B cell (primary cell): ENCODE measurements at regions of chr16 and their contacts with region 1.

Region 1: GRCh38 chr16:70653809-70654771 is 7.7 kb downstream of the IL34 start:
- DNase-seq: peak; percentile 82
- ATAC-seq: peak; percentile 88
- H3K4me3 ChIP-seq: peak overlapping the region in 1 of 5 experiments; percentile 15
- H3K4me3 Mint-ChIP-seq: peak overlapping the region; percentile 3
- H3K27ac ChIP-seq: no peak overlapping the region
- H3K27ac Mint-ChIP-seq: no peak overlapping the region
- H3K4me1 ChIP-seq: peaks cover 2 to 5% of the 10 kb centered on the region in 2 donors
- H3K4me1 Mint-ChIP-seq: peaks cover 4% of the 10 kb centered on the region
- H3K27me3 ChIP-seq: no peaks in the 10 kb centered on the region
- H3K27me3 Mint-ChIP-seq: peaks cover 3% of the 10 kb centered on the region
- CTCF ChIP-seq: peak; percentile 88

Region 2: DNA sequence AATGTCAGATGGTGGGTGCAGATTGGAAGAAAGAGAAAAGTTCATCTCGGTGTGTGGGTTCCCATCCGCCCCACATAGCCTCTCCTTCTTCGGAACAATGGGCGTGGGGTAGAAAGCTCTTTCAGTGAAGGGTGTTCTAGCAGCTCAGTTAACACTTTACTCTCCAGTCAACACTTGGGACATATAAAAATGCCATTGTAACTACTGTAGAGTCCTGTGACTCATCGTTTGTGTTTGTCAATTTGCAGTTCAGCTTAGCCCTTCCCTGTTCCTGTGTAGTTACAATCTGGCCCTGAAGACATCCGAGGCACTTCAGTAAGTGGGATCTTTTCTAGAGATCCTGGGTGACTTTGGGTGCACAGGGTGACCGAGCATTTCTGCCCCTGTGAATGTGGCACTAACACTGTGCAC is 492.0 kb before region 1 on chr16:
- CTCF ChIA-PET with region 1: interaction called, 9 read pairs
- POLR2A ChIA-PET with region 1: no interaction called
- intact Hi-C with region 1: loop called (anchors 10 kb)
- DNase-seq: no peak
- ATAC-seq: no peak
- H3K4me3 ChIP-seq: no peak overlapping the region
- H3K4me3 Mint-ChIP-seq: no peak overlapping the region
- H3K27ac ChIP-seq: no peak overlapping the region
- H3K27ac Mint-ChIP-seq: no peak overlapping the region
- H3K4me1 ChIP-seq: no peaks in the 10 kb centered on the region
- H3K4me1 Mint-ChIP-seq: peaks cover 3% of the 10 kb centered on the region
- H3K27me3 ChIP-seq: no peaks in the 10 kb centered on the region
- H3K27me3 Mint-ChIP-seq: no peaks in the 10 kb centered on the region
- CTCF ChIP-seq: no peak

Region 3: DNA sequence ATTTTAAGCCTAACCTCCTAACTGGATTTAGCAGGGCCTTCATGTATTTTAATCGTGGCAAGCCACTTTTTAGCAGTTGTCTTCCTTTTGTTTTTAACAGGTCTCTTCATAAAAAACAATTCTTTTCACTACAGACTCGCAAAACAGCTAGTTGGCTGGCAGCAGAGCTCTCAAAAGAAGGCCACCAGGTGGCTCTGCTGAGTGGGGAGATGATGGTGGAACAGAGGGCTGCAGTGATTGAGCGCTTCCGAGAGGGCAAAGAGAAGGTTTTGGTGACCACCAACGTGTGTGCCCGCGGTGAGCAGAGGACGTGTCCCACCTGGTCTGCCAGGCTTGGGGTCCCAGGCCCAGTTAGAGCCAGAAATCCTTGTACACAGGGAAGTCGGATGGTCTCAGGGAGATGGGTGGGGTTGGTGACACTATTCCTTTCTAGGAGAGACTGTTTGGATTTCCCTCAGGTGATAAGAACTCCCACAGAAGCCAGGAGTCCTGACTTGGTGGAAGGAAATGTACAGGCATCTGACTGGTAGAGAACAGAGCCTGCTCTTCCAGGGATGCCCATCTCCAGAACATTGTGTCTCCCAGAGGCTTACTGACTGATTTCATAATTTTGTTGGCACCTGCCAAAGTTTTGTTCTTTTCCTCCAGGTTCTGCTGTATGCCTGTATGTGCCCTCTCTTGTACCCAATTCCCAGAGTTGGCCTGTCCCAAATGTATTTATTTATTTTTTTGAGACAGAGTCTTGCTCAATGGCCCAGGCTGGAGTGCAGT is 322.3 kb before region 1 on chr16:
- CTCF ChIA-PET with region 1: interaction called, 12 read pairs
- POLR2A ChIA-PET with region 1: no interaction called
- intact Hi-C with region 1: no loop called
- DNase-seq: no peak
- ATAC-seq: peak; percentile 28
- H3K4me3 ChIP-seq: no peak overlapping the region
- H3K4me3 Mint-ChIP-seq: no peak overlapping the region
- H3K27ac ChIP-seq: no peak overlapping the region
- H3K27ac Mint-ChIP-seq: no peak overlapping the region
- H3K4me1 ChIP-seq: no peaks in the 10 kb centered on the region
- H3K4me1 Mint-ChIP-seq: no peaks in the 10 kb centered on the region
- H3K27me3 ChIP-seq: no peaks in the 10 kb centered on the region
- H3K27me3 Mint-ChIP-seq: no peaks in the 10 kb centered on the region
- CTCF ChIP-seq: peak; percentile 46

Region 4: DNA sequence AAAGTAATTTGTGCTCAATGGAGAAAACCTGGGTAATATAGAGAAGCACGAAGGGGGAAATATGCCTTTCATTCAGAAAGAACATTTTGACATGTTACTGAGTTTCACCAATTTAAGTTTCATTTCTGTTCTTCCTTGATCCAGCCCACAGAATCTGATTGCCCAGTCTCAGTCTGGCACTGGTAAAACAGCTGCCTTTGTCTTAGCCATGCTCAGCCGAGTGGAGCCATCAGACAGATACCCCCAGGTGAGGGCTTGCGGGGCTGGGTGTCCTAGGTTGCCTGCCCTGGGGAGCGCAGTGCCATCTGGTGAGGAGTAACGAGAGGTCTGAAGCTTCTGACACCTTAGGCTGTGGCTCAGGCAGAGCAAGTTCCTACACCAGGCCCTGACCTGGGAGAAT is 289.7 kb before region 1 on chr16:
- CTCF ChIA-PET with region 1: interaction called, 10 read pairs
- POLR2A ChIA-PET with region 1: no interaction called
- intact Hi-C with region 1: no loop called
- DNase-seq: no peak
- ATAC-seq: no peak
- H3K4me3 ChIP-seq: no peak overlapping the region
- H3K4me3 Mint-ChIP-seq: no peak overlapping the region
- H3K27ac ChIP-seq: no peak overlapping the region
- H3K27ac Mint-ChIP-seq: no peak overlapping the region
- H3K4me1 ChIP-seq: no peaks in the 10 kb centered on the region
- H3K4me1 Mint-ChIP-seq: no peaks in the 10 kb centered on the region
- H3K27me3 ChIP-seq: no peaks in the 10 kb centered on the region
- H3K27me3 Mint-ChIP-seq: no peaks in the 10 kb centered on the region
- CTCF ChIP-seq: no peak

Region 5: DNA sequence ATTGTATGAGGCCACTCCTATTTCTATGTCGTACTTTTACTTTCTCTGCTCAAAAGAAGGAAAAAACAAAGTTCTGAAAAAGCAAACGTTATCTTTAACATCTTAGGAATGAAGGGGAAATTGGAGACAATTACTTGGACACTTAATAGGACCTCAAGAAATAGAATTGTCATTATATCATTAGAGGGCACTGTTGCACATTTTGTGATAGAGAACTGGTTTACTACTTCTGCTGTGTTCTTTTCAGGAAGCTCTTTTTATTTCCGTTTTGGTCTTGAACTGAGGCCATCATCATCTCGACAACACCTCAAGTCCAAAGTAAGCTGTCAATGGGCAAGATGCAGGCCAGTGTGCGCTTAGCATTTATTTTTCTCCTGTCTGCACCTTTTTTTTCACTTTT is 145.3 kb before region 1 on chr16:
- CTCF ChIA-PET with region 1: interaction called, 3 read pairs
- POLR2A ChIA-PET with region 1: no interaction called
- intact Hi-C with region 1: loop called (anchors 1 kb)
- DNase-seq: peak; percentile 39
- ATAC-seq: no peak
- H3K4me3 ChIP-seq: no peak overlapping the region
- H3K4me3 Mint-ChIP-seq: no peak overlapping the region
- H3K27ac ChIP-seq: no peak overlapping the region
- H3K27ac Mint-ChIP-seq: peak overlapping the region; percentile 75
- H3K4me1 ChIP-seq: peaks cover 3 to 5% of the 10 kb centered on the region in 2 donors
- H3K4me1 Mint-ChIP-seq: peaks cover 7% of the 10 kb centered on the region
- H3K27me3 ChIP-seq: no peaks in the 10 kb centered on the region
- H3K27me3 Mint-ChIP-seq: no peaks in the 10 kb centered on the region
- CTCF ChIP-seq: no peak